ENCODE measurements at regions of chr4 and their contacts with region 1.

Region 1: DNA sequence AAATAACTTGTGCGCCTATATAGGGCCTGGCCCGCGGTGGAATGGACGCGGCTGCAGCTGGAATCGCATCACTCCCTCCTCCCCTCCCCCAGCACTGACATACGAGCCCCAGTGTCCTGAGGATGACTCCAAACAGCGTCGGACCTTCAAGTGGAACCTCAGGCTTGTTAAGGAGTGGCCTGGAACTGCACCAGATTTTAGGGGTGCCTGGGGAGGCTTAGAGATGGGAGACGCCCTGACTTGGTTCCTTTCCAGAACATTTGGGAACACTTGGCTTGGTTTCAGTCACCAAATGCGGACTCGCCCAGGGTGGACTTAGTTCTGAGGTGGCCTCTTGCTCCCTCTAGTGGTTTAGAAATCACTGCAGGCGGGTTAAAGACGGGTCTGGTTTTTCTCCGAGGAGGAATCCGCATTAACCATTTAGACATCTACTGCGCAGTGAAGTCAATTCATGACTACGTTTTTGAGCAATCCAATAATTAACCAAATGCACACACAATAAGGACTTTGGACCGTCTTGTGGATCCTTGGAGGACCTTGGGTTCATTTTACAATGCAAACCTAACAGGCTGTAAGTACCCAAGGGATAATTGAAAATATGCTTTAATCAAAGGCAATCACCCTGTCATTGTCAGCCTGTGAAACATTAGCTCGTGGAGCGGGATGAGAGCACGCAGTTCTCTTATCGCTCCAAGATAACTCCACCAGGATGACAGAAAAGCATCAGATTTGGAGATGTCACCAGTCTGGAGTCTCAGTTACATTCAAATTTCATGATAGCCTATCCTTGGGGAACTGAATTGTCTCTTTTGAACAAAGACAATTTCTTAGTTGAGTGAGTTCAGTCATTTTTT is 11.2 kb upstream of the PDGFRA start:
- DNase-seq: peak; percentile 83
- ATAC-seq: peak; percentile 92 to 95

Region 2: GRCh38 chr4:53908661-53909078 is 309.2 kb before region 1 on chr4:
- intact Hi-C with region 1: loop called in 1 of 2 experiments (anchors 5 kb)
- DNase-seq: no peak
- ATAC-seq: peak; percentile 87 to 92

Region 3: DNA sequence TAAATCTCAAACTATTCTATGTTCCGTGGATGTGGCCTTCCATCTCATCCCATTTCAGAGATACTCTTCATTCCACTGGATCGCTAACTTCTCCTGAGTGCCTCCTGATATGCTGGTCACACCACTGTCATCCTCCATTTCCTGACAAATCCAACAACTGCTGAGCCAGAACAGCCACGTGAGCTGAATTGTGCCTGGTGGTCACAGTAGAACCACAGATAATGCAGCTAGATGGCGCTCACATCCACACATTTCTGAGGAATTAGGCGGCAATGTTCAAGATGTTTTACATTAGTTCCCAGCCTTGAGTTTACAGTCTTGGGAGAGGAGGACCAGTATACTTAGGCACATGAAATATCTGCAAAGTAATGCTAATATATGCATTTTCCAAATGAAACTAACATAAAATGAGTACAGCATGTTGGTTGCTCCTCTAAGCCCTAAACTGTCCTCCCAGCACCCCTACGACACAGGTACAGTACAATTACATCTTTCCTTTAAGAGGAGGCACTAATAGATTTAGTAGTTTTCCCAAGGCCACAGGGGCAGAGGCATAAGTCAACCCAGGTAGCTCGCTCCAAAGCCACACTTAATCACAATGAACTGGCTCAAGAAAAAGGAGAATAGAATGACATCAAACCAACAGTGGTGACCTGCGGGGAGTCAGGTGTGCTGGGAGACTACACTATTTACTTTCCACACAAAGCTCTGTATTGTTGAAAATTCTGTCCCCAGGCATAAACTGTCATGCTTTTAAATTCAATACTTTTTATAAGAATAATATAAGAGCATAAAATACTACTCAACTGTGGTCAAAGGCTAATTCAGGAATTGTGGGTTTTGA is 287.7 kb before region 1 on chr4:
- intact Hi-C with region 1: loop called (anchors 5 kb)
- DNase-seq: peak; percentile 76
- ATAC-seq: peak; percentile 88 to 90

Region 4: GRCh38 chr4:54064295-54065111 is 153.4 kb before region 1 on chr4 and contains the start of gene CHIC2:
- intact Hi-C with region 1: loop called in 1 of 2 experiments (anchors 10 kb)
- DNase-seq: peak; percentile 97
- ATAC-seq: peak; percentile 90 to 95
- total RNA-seq, gene CHIC2: 11.0 to 16.9 TPM

Region 5: GRCh38 chr4:54169176-54169575 is 48.7 kb before region 1 on chr4:
- intact Hi-C with region 1: no loop called
- DNase-seq: no peak
- ATAC-seq: no peak